ENCODE measurements at regions of chr14 and their contacts with region 1.

Region 1: GRCh38 chr14:70622111-70622712 is 19.5 kb upstream of the TTC9 start:
- DNase-seq: no peak
- H3K4me3 ChIP-seq: no peak overlapping the region
- H3K27me3 ChIP-seq: no peaks in the 10 kb centered on the region
- CTCF ChIP-seq: peak; percentile 86

Region 2: GRCh38 chr14:70538087-70538486 is 84.1 kb before region 1 on chr14:
- CTCF ChIA-PET with region 1: no interaction called
- POLR2A ChIA-PET with region 1: no interaction called
- DNase-seq: no peak
- H3K4me3 ChIP-seq: no peak overlapping the region
- H3K27me3 ChIP-seq: no peaks in the 10 kb centered on the region
- CTCF ChIP-seq: no peak

Region 3: GRCh38 chr14:70635971-70636595 is 13.9 kb after region 1 on chr14:
- CTCF ChIA-PET with region 1: interaction called, 10 read pairs
- POLR2A ChIA-PET with region 1: no interaction called
- DNase-seq: no peak
- H3K4me3 ChIP-seq: no peak overlapping the region
- H3K27me3 ChIP-seq: peaks cover 19% of the 10 kb centered on the region
- CTCF ChIP-seq: no peak

Region 4: GRCh38 chr14:70714055-70714621 is 91.9 kb after region 1 on chr14:
- CTCF ChIA-PET with region 1: interaction called, 82 read pairs
- POLR2A ChIA-PET with region 1: no interaction called
- DNase-seq: no peak
- H3K4me3 ChIP-seq: no peak overlapping the region
- H3K27me3 ChIP-seq: peaks cover 2% of the 10 kb centered on the region; the same call in 1 of the 2 replicates
- CTCF ChIP-seq: peak; percentile 52